ENCODE measurements at regions of chr1 and their contacts with region 1.

Region 1: DNA sequence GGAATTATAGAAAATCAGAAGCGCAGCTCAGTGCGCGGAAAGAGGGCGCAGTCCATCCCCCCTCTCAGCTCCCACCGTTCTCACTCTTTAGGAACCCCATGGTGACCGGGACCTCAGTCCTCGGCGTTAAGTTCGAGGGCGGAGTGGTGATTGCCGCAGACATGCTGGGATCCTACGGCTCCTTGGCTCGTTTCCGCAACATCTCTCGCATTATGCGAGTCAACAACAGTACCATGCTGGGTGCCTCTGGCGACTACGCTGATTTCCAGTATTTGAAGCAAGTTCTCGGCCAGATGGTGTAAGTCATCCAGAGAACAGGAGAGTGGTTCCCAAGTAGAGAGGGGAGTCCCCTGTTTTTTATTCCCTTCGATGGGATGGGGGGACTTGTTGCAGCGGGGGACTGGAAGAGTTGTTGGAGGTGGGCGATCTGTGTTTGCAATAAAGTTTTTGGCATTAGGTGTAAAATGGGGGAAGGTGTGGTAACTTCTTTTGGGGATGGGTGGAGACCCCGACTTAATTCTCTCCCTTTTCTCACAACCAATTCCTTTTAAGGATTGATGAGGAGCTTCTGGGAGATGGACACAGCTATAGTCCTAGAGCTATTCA is 620 bp downstream of the PSMB4 start:
- DNase-seq: peak in 1 of 5 donors; percentile 31
- ATAC-seq: peak in 3 of 4 donors; percentile 19 to 29 (median 23)
- H3K4me3 ChIP-seq: peak overlapping the region; percentile 33 to 100 (median 82)
- H3K27ac ChIP-seq: peak overlapping the region; percentile 64 to 94 (median 86)
- H3K4me1 ChIP-seq: peaks cover 3 to 20% (median 14%) of the 10 kb centered on the region in 12 donors
- H3K27me3 ChIP-seq: no peaks in the 10 kb centered on the region
- CTCF ChIP-seq: no peak
- POLR2A ChIP-seq: no peak

Region 2: DNA sequence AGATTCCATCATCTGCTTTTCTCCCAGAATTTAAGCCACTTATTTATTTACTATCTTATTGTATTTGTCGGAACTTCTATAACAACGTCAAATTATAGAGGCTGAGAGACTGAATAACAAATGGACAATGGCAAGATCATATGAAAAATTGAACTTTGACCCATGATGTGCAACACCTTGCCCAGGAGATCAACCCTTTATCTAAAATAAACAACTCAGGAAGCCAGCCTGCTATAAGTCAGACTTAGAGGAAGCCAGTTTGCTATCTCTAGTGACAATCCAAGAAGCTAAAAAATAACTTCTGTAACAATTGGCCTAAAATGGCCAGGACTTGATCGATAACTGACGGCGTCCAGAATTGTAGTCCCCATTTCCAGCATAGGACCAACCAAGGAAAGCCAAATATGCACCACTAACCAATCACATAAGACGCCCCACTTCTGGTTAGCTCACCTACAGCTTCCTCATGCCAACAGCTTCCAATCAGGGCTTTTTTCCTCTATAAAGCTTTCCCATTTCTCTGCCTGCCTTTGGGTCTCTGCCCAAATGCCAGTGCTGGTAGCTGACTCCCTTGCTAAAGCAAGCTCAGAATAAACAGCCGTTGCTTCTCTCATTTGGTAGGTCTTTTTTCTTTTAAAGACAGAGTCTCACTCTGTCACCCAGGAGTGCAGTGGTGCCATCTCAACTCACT is 1192.6 kb before region 1 on chr1:
- intact Hi-C with region 1: no loop called
- DNase-seq: no peak
- ATAC-seq: no peak
- H3K4me3 ChIP-seq: no peak overlapping the region
- H3K27ac ChIP-seq: no peak overlapping the region
- H3K4me1 ChIP-seq: no peaks in the 10 kb centered on the region
- H3K27me3 ChIP-seq: no peaks in the 10 kb centered on the region
- CTCF ChIP-seq: no peak
- POLR2A ChIP-seq: no peak

Region 3: GRCh38 chr1:150829743-150830142 is 570.2 kb before region 1 on chr1:
- intact Hi-C with region 1: no loop called
- DNase-seq: no peak
- ATAC-seq: no peak
- H3K4me3 ChIP-seq: no peak overlapping the region
- H3K27ac ChIP-seq: no peak overlapping the region
- H3K4me1 ChIP-seq: no peaks in the 10 kb centered on the region
- H3K27me3 ChIP-seq: no peaks in the 10 kb centered on the region
- CTCF ChIP-seq: peak in 2 of 12 donors; percentile 17 to 28
- POLR2A ChIP-seq: no peak

Region 4: GRCh38 chr1:151281969-151282882 is 117.8 kb before region 1 on chr1 and contains the start of gene ZNF687:
- intact Hi-C with region 1: loop called in 1 of 10 experiments (anchors 1 kb)
- DNase-seq: peak; percentile 100
- ATAC-seq: peak; percentile 91 to 98 (median 94)
- H3K4me3 ChIP-seq: peak within 1 kb of the TSS; percentile 71 to 98 (median 90)
- H3K27ac ChIP-seq: peak within 1 kb of the TSS; percentile 92 to 100 (median 98)
- H3K4me1 ChIP-seq: peaks cover 0 to 37% (median 14%) of the 10 kb centered on the region in 12 donors
- H3K27me3 ChIP-seq: no peaks in the 10 kb centered on the region
- CTCF ChIP-seq: no peak
- POLR2A ChIP-seq: peak in 1 of 2 donors; percentile 78
- total RNA-seq, gene ZNF687: 10.9 to 30.3 (median 14.3) TPM

Region 5: DNA sequence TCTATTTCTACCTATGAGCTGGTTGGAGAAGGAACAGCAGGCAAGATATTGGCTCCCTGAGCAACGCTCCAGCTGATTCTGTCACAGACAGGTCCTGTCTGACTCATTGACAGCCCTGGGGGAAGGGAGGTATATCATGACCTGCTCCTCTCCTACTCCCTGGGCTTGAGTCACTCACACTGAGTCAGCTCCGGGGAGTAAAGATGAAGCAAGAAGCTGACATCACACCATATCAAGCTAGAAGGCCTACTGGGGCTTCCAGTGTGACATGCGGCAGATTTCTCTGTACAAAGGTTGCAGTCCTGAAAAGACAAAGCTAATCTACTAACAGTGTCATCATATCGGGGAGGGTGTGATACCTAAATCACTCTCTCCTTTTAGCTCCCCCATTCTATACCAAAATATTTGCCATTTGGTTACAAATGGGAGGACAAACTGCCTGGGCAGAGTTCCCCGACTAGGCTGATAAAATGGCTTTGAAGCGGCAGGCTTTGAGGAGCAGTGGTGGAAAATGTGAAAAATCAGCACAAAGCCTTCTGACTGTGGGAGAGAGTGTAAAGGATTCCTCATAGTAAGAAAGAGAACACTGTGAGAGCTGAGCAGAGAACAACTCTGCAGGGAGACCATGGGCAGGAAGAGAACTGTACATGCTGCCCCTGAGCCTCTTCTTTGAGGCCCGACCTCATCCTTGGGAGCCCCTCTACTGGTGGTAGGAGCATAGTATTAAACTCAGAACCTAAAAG is 88.2 kb before region 1 on chr1:
- intact Hi-C with region 1: loop called in 3 of 10 experiments (anchors 5 to 10 kb)
- DNase-seq: peak in 4 of 5 donors; percentile 54 to 94 (median 74)
- ATAC-seq: peak; percentile 77 to 97 (median 92)
- H3K4me3 ChIP-seq: no peak overlapping the region
- H3K27ac ChIP-seq: peak overlapping the region in 11 of 12 donors; percentile 52 to 91 (median 74)
- H3K4me1 ChIP-seq: peaks cover 24 to 73% (median 60%) of the 10 kb centered on the region in 12 donors
- H3K27me3 ChIP-seq: no peaks in the 10 kb centered on the region
- CTCF ChIP-seq: no peak
- POLR2A ChIP-seq: no peak

Region 6: GRCh38 chr1:151340870-151341754 is 58.9 kb before region 1 on chr1:
- intact Hi-C with region 1: loop called in 9 of 10 experiments (anchors 2 to 5 kb)
- DNase-seq: peak in 3 of 5 donors; percentile 33 to 61 (median 43)
- ATAC-seq: peak; percentile 85 to 91 (median 88)
- H3K4me3 ChIP-seq: no peak overlapping the region
- H3K27ac ChIP-seq: peak overlapping the region in 2 of 12 donors; percentile 30 to 54
- H3K4me1 ChIP-seq: peaks cover 0 to 24% (median 7%) of the 10 kb centered on the region in 12 donors
- H3K27me3 ChIP-seq: no peaks in the 10 kb centered on the region
- CTCF ChIP-seq: peak; percentile 61 to 81 (median 73)
- POLR2A ChIP-seq: no peak

Region 7: DNA sequence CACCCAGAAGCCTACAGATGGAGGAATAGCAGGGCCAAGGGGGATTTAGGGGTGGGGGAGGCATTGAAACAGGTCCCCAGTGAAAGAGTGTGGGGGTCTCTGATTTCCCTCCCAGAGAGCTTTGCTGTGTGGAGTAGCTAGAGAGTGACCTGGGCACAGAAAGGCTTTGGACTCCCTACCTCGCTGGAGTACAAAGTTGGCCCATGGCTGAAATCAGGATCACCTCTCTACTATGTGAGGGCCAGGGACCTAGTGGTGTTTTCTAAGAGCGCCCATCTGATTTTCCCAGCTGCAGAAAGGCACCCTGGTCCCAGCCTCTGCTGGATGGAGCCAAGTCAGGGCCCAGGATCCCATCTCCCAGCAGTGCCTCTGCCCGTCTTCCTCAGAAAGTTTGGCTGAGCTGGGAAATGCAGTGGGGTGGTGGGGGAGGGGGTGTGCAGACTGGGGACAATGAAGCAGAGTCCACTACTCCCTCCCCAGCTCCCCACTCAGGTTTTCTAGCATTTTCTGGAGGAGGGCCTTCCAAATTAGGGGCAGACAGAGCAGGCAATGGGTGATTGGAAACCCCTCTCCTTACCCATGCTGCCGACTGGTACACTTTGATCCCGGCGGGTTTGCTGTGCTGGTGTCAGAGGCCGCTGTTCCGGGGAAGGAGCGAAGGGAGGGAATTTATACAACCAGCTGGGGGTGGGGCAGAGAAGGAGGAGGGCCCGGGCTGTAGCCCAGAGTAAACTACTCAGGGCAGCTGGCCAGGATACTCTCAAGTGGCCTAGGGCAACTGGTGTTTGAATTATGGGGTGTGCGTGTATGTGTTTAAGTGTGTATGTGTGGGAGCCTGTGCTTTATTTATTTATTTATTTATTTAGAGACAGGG is 27.7 kb before region 1 on chr1 and contains the start of gene SELENBP1:
- intact Hi-C with region 1: loop called in 1 of 10 experiments (anchors 2 kb)
- DNase-seq: peak; percentile 79 to 95 (median 90)
- ATAC-seq: peak; percentile 86 to 91 (median 86)
- H3K4me3 ChIP-seq: peak within 1 kb of the TSS; percentile 2 to 74 (median 52)
- H3K27ac ChIP-seq: peak within 1 kb of the TSS; percentile 66 to 89 (median 84)
- H3K4me1 ChIP-seq: peaks cover 4 to 58% (median 48%) of the 10 kb centered on the region in 12 donors
- H3K27me3 ChIP-seq: no peaks in the 10 kb centered on the region
- CTCF ChIP-seq: no peak
- POLR2A ChIP-seq: peak in 1 of 2 donors; percentile 85
- total RNA-seq, gene SELENBP1: 27.6 to 97.8 (median 48.7) TPM

Measured in heart left ventricle (tissue), 16 donors.